ENCODE measurements at regions of chr1 and their contacts with region 1.

Region 1: DNA sequence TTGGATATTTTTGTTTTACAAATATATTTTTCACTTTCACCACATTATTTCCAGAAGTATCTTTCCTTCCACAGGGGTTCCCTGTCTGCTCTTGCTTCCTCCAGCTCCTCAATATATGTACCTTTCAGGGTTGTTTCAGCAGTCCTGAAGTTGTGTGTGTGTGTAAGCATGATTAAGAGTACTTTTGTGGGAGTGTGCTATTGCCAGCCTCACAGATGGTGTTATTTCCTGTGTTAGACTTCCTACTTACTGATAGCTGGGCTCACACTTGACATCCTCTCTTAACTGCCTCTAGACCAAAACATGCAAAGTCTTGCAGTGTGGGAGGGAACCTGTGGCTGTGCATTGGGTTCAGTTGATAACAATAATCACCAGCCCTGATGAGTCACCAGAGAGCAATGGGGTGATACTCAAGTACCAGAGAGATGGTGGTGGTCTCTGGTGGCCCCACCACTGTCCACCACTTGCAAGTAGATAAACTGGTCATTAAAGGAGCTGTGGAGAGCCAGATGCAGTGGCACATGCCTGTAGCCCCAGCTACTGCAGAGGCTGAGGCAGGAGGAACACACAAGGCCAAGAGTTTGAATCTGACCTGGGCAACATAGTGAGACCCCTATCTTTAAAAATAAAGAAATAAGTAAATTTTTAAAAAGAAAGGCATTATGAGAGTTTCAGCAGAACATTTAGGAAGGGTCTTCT is 126.7 kb downstream of the NR5A2 start:
- DNase-seq: peak; percentile 70
- H3K4me3 Mint-ChIP-seq: no peak overlapping the region
- H3K27ac Mint-ChIP-seq: peak overlapping the region; percentile 86
- H3K4me1 Mint-ChIP-seq: peaks cover 40% of the 10 kb centered on the region
- H3K27me3 Mint-ChIP-seq: no peaks in the 10 kb centered on the region

Region 2: DNA sequence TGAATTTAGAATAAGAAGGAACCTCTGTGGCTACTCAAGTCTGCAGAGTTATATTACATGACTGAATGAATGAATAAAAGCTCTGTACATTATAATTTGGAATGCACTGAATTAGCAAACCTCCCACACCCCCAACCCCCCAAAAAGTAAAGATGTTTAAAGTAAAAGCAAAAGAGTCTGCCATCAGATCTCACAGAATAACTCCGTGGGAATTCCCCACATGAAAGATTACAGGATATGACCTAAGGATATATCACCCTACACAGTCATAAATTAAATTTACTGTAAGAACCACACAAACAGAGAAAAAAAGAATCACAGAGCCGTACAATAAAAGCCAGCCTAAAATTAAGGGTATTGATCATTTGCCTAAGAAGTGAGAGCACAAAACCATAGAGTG is 928.1 kb before region 1 on chr1:
- CTCF ChIA-PET with region 1: no interaction called
- POLR2A ChIA-PET with region 1: no interaction called
- intact Hi-C with region 1: loop called (anchors 2 kb)
- DNase-seq: peak; percentile 47
- H3K4me3 Mint-ChIP-seq: peak overlapping the region; percentile 35
- H3K27ac Mint-ChIP-seq: peak overlapping the region; percentile 55
- H3K4me1 Mint-ChIP-seq: peaks cover 20% of the 10 kb centered on the region
- H3K27me3 Mint-ChIP-seq: no peaks in the 10 kb centered on the region

Region 3: GRCh38 chr1:200206340-200206739 is 52.1 kb after region 1 on chr1:
- CTCF ChIA-PET with region 1: no interaction called
- POLR2A ChIA-PET with region 1: interaction called, 3 read pairs
- intact Hi-C with region 1: loop called (anchors 1 kb)
- DNase-seq: no peak
- H3K4me3 Mint-ChIP-seq: no peak overlapping the region
- H3K27ac Mint-ChIP-seq: no peak overlapping the region
- H3K4me1 Mint-ChIP-seq: peaks cover 11% of the 10 kb centered on the region
- H3K27me3 Mint-ChIP-seq: no peaks in the 10 kb centered on the region

Region 4: DNA sequence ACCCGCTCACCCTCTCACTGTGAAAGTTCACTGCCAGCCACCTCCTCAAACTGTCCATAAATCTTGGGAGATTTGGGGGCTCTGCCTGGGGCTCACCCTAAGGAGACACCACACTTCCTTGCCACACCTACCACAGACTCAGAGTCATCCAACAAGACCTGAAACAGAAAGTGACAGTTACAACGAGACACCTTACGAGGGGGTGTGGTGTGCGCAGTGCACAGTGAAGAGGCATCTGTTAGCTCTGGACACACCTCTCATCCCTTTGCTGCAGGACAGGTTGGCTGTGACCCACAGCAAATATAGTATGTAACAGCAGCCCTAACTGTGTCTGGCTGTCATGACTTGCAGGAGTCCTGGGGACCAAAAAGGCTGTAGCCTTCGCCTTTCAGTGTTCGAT is 63.5 kb after region 1 on chr1:
- CTCF ChIA-PET with region 1: no interaction called
- POLR2A ChIA-PET with region 1: no interaction called
- intact Hi-C with region 1: no loop called
- DNase-seq: peak; percentile 12
- H3K4me3 Mint-ChIP-seq: no peak overlapping the region
- H3K27ac Mint-ChIP-seq: no peak overlapping the region
- H3K4me1 Mint-ChIP-seq: peaks cover 7% of the 10 kb centered on the region
- H3K27me3 Mint-ChIP-seq: peaks cover 6% of the 10 kb centered on the region

Region 5: GRCh38 chr1:200258447-200259375 is 104.5 kb after region 1 on chr1:
- CTCF ChIA-PET with region 1: no interaction called
- POLR2A ChIA-PET with region 1: interaction called, 3 read pairs
- intact Hi-C with region 1: loop called (anchors 1 kb)
- DNase-seq: no peak
- H3K4me3 Mint-ChIP-seq: no peak overlapping the region
- H3K27ac Mint-ChIP-seq: no peak overlapping the region
- H3K4me1 Mint-ChIP-seq: peaks cover 18% of the 10 kb centered on the region
- H3K27me3 Mint-ChIP-seq: peaks cover 9% of the 10 kb centered on the region

Region 6: DNA sequence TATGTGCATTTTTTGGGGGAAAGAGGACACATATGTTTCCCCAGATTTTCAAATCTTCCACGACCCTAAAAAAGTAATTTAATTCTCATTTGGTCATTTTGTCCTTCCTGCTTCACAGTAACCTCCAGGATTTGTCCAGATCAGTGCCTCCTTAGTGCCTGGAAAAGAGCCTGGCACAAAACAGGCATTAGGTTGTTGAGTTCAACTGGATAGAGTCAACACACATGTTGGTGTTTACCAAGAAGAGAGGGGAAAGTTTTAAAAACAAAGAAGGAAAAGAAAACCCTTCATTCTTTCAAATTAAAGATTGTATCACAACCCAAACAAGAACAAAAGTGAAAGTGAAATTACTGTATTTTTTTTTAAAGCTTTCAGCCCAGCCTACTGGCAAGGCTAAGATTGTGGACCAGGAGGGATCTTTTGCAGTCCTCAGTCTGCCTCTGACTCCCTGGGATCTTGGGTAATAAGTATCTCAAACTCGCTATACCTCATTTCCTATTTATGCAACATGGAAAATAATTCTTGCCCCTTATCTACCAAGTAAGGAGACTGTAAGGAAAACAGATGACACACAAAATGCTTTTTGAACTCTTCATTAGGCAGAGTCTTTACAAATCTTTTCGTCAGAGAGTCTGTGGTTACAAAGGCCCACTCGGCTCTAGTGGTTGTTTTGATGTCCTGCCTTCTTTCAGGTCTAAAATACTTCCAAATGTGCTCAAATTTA is 197.8 kb after region 1 on chr1:
- CTCF ChIA-PET with region 1: no interaction called
- POLR2A ChIA-PET with region 1: no interaction called
- intact Hi-C with region 1: loop called (anchors 5 kb)
- DNase-seq: peak; percentile 24
- H3K4me3 Mint-ChIP-seq: peak overlapping the region; percentile 55
- H3K27ac Mint-ChIP-seq: peak overlapping the region; percentile 61
- H3K4me1 Mint-ChIP-seq: peaks cover 34% of the 10 kb centered on the region
- H3K27me3 Mint-ChIP-seq: no peaks in the 10 kb centered on the region

Region 7: GRCh38 chr1:200448034-200448762 is 294.0 kb after region 1 on chr1:
- CTCF ChIA-PET with region 1: no interaction called
- POLR2A ChIA-PET with region 1: no interaction called
- intact Hi-C with region 1: loop called (anchors 1 kb)
- DNase-seq: peak; percentile 24
- H3K4me3 Mint-ChIP-seq: peak overlapping the region; percentile 38
- H3K27ac Mint-ChIP-seq: peak overlapping the region; percentile 87
- H3K4me1 Mint-ChIP-seq: peaks cover 41% of the 10 kb centered on the region
- H3K27me3 Mint-ChIP-seq: no peaks in the 10 kb centered on the region

Region 8: GRCh38 chr1:200488375-200489165 is 334.4 kb after region 1 on chr1:
- CTCF ChIA-PET with region 1: interaction called, 5 read pairs
- POLR2A ChIA-PET with region 1: no interaction called
- intact Hi-C with region 1: loop called (anchors 1 kb)
- DNase-seq: peak; percentile 50
- H3K4me3 Mint-ChIP-seq: no peak overlapping the region
- H3K27ac Mint-ChIP-seq: no peak overlapping the region
- H3K4me1 Mint-ChIP-seq: peaks cover 14% of the 10 kb centered on the region
- H3K27me3 Mint-ChIP-seq: peaks cover 18% of the 10 kb centered on the region

Measured in activated CD4-positive, alpha-beta memory T cell treated with anti-CD3 and anti-CD28 coated beads for 36 hours (primary cell).